Activated B cell treated with CpG ODN at 0.5 μM for 24 hours (primary cell): ENCODE measurements at regions of chr7 and their contacts with region 1.

Region 1: DNA sequence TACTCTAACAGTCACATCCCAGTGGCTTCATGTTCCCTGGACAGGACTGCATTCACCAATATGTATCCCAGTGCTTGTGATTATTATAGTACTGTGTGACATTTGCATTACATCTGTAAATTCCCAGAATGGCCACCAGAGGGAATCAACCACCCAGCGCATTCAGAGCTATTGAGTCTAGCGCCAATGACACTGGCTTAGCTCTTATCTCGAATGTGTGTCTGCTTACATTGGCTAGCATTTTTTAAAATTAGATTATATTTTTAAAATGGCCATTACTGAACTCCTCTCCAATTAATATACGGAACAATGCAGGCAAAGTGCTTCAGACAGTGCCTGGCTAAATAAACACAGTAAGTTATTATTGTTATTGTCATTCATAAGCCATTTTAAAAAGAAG is 36.3 kb downstream of the TRIL start:
- DNase-seq: no peak
- ATAC-seq: peak; percentile 87
- H3K4me3 Mint-ChIP-seq: no peak overlapping the region
- H3K27ac Mint-ChIP-seq: no peak overlapping the region
- H3K4me1 Mint-ChIP-seq: peaks cover 12% of the 10 kb centered on the region
- H3K27me3 Mint-ChIP-seq: peaks cover 3% of the 10 kb centered on the region
- CTCF ChIP-seq: peak; percentile 83

Region 2: DNA sequence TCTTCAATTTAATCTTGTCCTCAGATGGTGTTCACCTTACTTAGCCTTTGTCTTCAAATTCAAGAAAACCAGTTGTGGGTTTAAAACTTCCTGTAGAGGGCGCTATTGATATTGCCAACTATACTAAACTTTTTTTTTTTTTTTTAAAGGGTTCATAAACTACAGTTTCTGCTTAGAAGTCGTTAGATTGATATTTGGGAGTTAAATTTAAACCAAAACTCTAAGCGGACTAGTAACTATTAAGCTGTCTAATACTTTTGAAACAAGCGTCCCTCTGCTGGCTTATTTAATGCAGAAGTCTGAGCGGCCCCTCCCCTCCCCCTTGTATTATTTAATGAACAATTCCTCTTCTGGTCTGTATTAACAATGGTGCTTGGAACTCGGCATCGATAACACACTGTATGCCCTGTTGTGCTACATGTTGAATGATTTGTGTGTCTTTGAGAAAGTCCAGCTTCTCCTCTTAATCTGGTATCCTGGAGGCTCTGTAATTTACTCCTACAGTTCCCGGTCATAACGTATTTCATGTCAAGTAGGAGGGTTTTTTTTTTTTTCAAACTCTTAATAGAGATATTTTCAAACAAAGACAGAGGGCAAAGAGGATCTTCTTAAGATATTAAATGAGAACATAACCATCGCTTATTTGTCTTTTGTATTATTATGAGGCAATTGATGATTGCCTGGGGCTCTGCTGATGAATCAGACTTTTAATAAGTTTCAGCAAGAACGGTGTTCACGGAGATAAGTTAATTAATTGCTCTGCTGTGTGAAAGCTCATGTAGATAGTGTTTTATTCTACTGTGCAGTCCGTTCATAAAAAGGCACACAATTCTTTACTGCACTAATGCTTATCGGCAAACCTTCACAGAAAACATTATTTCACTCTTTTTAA is 532.1 kb before region 1 on chr7:
- CTCF ChIA-PET with region 1: interaction called, 3 read pairs
- POLR2A ChIA-PET with region 1: no interaction called
- intact Hi-C with region 1: loop called (anchors 2 kb)
- DNase-seq: no peak
- ATAC-seq: peak; percentile 25
- H3K4me3 Mint-ChIP-seq: no peak overlapping the region
- H3K27ac Mint-ChIP-seq: no peak overlapping the region
- H3K4me1 Mint-ChIP-seq: peaks cover 3% of the 10 kb centered on the region
- H3K27me3 Mint-ChIP-seq: peaks cover 17% of the 10 kb centered on the region
- CTCF ChIP-seq: peak; percentile 44

Region 3: DNA sequence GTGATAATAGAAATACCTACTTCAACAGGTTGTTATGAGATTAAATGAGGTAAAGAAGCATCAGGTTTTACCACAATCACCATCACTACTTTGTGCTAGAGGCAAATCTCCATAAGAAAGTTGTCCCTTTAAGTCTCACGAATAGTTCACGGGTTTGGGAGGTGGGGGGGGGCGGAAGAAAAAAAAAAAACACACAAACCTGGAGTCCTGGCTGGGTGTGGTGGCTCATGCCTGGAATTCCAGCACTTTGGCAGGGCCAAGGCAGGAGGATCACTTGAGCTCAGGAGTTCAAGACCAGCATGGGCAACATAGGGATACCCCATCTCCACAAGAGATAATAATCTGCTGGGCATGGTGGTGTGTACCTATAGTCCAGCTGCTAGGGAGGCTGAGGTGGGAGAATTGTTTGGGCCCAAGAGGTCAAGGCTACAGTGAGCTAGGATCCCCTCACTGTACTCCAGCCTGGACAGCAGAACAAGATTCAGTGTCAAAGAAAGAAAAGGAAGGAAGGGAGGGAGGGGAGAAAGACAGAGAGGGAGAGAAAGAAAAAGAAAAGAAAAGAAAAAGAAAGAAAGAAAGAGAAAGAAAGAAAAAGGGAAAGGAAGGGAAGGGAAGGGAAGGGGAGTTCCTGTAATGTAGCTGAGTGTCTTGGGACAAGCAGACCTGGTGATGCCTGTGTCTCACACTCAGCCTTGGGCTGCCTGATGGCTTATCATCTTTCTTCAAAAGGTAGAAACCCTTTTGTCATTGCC is 278.1 kb before region 1 on chr7:
- CTCF ChIA-PET with region 1: no interaction called
- POLR2A ChIA-PET with region 1: no interaction called
- intact Hi-C with region 1: no loop called
- DNase-seq: no peak
- ATAC-seq: no peak
- H3K4me3 Mint-ChIP-seq: no peak overlapping the region
- H3K27ac Mint-ChIP-seq: no peak overlapping the region
- H3K4me1 Mint-ChIP-seq: no peaks in the 10 kb centered on the region
- H3K27me3 Mint-ChIP-seq: peaks cover 3% of the 10 kb centered on the region
- CTCF ChIP-seq: no peak

Region 4: GRCh38 chr7:28933846-28934320 is 12.1 kb after region 1 on chr7:
- CTCF ChIA-PET with region 1: interaction called, 16 read pairs
- POLR2A ChIA-PET with region 1: no interaction called
- intact Hi-C with region 1: no loop called
- DNase-seq: no peak
- ATAC-seq: no peak
- H3K4me3 Mint-ChIP-seq: no peak overlapping the region
- H3K27ac Mint-ChIP-seq: no peak overlapping the region
- H3K4me1 Mint-ChIP-seq: no peaks in the 10 kb centered on the region
- H3K27me3 Mint-ChIP-seq: peaks cover 41% of the 10 kb centered on the region
- CTCF ChIP-seq: no peak

Region 5: GRCh38 chr7:29105752-29106668 is 184.2 kb after region 1 on chr7:
- CTCF ChIA-PET with region 1: interaction called, 26 read pairs
- POLR2A ChIA-PET with region 1: no interaction called
- intact Hi-C with region 1: loop called (anchors 1 kb)
- DNase-seq: no peak
- ATAC-seq: peak; percentile 45
- H3K4me3 Mint-ChIP-seq: no peak overlapping the region
- H3K27ac Mint-ChIP-seq: no peak overlapping the region
- H3K4me1 Mint-ChIP-seq: no peaks in the 10 kb centered on the region
- H3K27me3 Mint-ChIP-seq: peaks cover 8% of the 10 kb centered on the region
- CTCF ChIP-seq: no peak

Region 6: DNA sequence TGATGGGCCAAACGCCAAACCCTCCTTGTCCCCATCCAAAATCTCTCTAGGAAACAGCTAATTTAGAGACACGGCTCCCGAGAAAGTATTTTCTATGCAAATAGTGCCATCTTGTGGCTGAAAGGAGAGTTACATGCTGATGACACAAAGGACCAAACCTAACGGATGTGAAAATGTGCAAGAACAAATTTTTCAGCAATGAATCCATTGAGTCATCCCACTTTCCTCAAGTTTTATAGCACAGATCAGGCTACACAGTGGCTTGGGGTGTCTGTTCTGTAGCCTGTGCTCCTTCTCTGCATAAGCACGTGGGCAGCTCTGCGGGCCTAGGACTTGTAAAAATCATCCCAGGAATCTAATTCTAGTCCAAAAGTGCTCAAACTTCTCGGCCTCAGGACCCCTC is 487.0 kb after region 1 on chr7:
- CTCF ChIA-PET with region 1: interaction called, 209 read pairs
- POLR2A ChIA-PET with region 1: no interaction called
- intact Hi-C with region 1: loop called (anchors 1 kb)
- DNase-seq: no peak
- ATAC-seq: peak; percentile 50
- H3K4me3 Mint-ChIP-seq: no peak overlapping the region
- H3K27ac Mint-ChIP-seq: no peak overlapping the region
- H3K4me1 Mint-ChIP-seq: no peaks in the 10 kb centered on the region
- H3K27me3 Mint-ChIP-seq: peaks cover 6% of the 10 kb centered on the region
- CTCF ChIP-seq: no peak